ENCODE measurements at regions of chr5 and their contacts with region 1.

Region 1: GRCh38 chr5:140557136-140557805 is at the start of gene SRA1:
- DNase-seq: peak; percentile 97
- H3K4me3 Mint-ChIP-seq: peak within 1 kb of the TSS; percentile 90
- H3K27ac Mint-ChIP-seq: peak within 1 kb of the TSS; percentile 92
- H3K4me1 Mint-ChIP-seq: peaks cover 46% of the 10 kb centered on the region
- H3K27me3 Mint-ChIP-seq: no peaks in the 10 kb centered on the region
- CTCF ChIP-seq: no peak
- total RNA-seq, gene SRA1: 29.5 and 33.0 TPM in 2 replicates

Region 2: GRCh38 chr5:140295414-140295813 is 261.9 kb before region 1 on chr5:
- CTCF ChIA-PET with region 1: no interaction called
- intact Hi-C with region 1: no loop called
- DNase-seq: peak; percentile 63
- H3K4me3 Mint-ChIP-seq: no peak overlapping the region
- H3K27ac Mint-ChIP-seq: peak overlapping the region; percentile 62
- H3K4me1 Mint-ChIP-seq: peaks cover 60% of the 10 kb centered on the region
- H3K27me3 Mint-ChIP-seq: no peaks in the 10 kb centered on the region
- CTCF ChIP-seq: no peak

Region 3: DNA sequence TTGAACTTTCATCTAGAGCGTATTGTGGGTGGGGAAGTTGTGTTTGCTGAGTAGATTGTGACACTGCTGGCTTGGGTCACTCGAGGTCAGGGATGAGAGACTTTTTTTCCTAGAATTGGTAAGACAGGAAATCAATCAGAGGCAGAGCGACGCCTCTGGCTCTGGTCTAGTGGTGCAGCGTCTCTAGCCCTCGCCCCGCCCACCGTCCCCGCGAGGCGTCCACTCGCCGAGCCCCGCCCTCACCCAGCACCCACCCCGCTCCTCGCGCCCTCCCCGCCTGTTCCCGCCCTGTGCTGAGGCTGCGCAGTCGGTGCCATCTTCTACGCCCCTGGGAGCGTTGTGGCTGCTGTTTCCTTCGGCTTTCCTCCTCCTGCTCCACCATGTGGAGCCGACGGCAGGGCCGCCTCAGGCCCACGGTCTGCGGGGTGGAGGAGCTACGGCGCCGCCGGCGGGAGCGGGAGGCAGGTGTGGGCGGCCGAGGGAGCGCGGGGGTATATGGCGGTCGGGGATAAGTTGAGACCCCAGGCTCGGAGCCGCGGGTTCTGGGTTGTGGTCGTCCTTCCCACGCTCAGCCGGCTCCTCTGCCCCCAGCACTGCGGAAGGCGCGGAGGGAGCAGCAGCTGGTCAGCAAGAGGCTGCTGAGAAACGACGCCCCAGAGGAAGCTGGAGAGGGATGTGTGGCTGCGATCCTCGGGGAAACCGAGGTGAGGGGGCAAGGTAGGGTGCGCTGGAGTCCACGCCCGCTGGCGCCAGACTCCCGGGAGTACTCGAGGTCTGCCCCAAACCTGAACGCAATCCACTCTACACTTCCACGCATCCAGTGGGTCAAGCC is 82.1 kb after region 1 on chr5 and contains the start of gene TMCO6:
- CTCF ChIA-PET with region 1: interaction called, 3 read pairs
- intact Hi-C with region 1: loop called (anchors 2 kb)
- DNase-seq: peak; percentile 99
- H3K4me3 Mint-ChIP-seq: peak within 1 kb of the TSS; percentile 96
- H3K27ac Mint-ChIP-seq: peak within 1 kb of the TSS; percentile 90
- H3K4me1 Mint-ChIP-seq: peaks cover 35% of the 10 kb centered on the region
- H3K27me3 Mint-ChIP-seq: no peaks in the 10 kb centered on the region
- CTCF ChIP-seq: peak; percentile 72
- total RNA-seq, gene TMCO6: 28.5 and 30.9 TPM in 2 replicates

Region 4: DNA sequence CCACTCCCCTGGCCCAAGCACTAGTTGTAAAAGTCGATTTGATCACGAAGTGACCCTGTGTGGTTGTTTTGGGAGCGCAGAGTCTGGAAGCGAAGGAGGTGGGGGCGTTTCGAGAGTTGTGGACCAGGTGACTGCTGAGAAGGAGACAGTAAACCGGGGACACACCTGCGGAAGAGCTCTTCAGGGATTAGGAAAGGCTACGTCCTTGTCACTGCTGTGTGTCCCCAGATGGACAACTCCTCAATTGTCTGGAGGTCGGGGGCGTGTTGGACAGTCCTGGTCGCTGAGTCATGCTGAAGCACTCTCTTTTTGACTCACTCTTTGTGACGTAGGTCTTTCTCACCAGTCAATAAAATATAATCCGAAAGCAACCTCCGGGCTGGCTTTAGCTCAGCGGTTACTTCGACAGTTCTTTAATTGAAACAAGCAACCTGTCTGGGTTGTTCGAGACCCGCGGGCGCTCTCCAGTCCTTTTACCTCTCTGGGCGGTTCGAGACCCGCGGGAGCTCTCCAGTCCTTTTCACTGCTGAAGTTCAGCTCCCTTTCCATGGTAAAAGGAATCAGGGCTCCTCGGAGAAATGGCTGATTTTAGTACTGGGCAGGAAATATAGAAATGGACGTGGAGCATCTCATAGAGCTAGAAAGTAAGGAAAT is 153.8 kb after region 1 on chr5:
- CTCF ChIA-PET with region 1: no interaction called
- intact Hi-C with region 1: loop called (anchors 10 kb)
- DNase-seq: peak; percentile 97
- H3K4me3 Mint-ChIP-seq: peak overlapping the region; percentile 99
- H3K27ac Mint-ChIP-seq: peak overlapping the region; percentile 100
- H3K4me1 Mint-ChIP-seq: peaks cover 32% of the 10 kb centered on the region
- H3K27me3 Mint-ChIP-seq: peaks cover 12% of the 10 kb centered on the region
- CTCF ChIP-seq: no peak